Prostate gland (tissue), 2 donors: ENCODE measurements at regions of chr13 and their contacts with region 1.

Region 1: DNA sequence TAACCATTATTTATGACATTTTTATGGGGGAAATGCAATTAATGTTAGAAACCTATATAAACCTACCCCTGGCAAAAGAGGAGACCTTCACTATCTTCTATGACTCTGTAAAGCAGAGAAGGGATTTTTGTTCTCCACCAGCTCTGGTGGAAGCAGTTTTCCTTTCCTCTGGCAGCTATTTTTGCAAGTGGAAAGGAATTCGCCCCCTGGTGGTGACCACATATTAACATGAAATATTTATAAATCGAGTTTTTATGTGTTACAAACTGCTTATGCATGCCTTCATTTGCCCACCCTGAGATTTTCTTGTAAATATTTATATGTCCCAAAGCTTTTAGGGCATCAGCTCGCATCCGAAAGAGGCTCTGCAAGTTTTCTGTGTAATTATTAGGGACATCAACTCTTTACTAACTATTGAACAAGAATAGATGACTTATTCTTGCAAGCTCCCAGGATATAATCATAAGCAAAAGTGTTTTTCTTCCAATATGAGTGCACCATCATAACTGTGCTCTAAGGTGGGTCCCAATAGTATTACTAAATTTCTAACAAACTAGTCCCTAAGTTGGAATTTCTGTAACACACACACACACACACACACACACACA is 62.4 kb downstream of the SERTM1 start:
- DNase-seq: peak; percentile 59
- H3K4me3 ChIP-seq: no peak overlapping the region
- H3K27ac ChIP-seq: no peak overlapping the region
- H3K4me1 ChIP-seq: no peaks in the 10 kb centered on the region
- H3K27me3 ChIP-seq: no peaks in the 10 kb centered on the region
- CTCF ChIP-seq: peak; percentile 54 to 80 (median 69)
- POLR2A ChIP-seq: no peak

Region 2: GRCh38 chr13:35984776-35985453 is 751.3 kb before region 1 on chr13:
- intact Hi-C with region 1: loop called (anchors 10 kb)
- DNase-seq: no peak
- H3K4me3 ChIP-seq: no peak overlapping the region
- H3K27ac ChIP-seq: no peak overlapping the region
- H3K4me1 ChIP-seq: no peaks in the 10 kb centered on the region
- H3K27me3 ChIP-seq: no peaks in the 10 kb centered on the region
- CTCF ChIP-seq: no peak
- POLR2A ChIP-seq: no peak

Region 3: DNA sequence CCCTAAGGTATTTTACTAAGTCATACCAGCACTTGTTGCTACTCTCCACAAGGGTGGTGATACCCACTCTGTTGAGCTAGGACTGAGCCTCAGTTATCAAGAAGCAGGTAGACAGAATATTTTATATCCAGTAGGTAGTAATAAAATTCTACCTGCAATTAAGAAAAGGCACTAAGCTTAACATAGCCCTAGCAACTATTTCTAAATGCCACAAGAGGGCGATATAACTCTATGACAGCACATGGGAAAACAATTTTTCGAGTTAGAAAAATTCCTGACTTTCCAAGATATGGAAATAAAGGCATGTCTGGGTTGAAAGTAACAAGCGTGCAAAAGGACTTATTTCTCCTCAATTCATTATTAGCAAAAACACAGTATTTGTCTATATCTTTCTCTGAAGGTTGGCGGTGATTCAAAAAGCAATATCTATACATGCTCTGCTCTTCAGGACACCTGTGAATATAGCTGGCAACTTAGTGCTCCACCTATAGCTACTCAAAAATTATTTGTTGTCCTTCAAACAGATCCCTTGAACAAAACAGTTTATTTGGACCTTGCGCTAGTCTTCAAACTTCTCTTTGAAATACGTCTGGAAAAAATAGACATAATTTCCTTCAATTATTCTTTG is 453.3 kb before region 1 on chr13:
- intact Hi-C with region 1: loop called (anchors 5 kb)
- DNase-seq: no peak
- H3K4me3 ChIP-seq: no peak overlapping the region
- H3K27ac ChIP-seq: no peak overlapping the region
- H3K4me1 ChIP-seq: no peaks in the 10 kb centered on the region
- H3K27me3 ChIP-seq: no peaks in the 10 kb centered on the region
- CTCF ChIP-seq: peak; percentile 47 to 80 (median 78)
- POLR2A ChIP-seq: no peak

Region 4: DNA sequence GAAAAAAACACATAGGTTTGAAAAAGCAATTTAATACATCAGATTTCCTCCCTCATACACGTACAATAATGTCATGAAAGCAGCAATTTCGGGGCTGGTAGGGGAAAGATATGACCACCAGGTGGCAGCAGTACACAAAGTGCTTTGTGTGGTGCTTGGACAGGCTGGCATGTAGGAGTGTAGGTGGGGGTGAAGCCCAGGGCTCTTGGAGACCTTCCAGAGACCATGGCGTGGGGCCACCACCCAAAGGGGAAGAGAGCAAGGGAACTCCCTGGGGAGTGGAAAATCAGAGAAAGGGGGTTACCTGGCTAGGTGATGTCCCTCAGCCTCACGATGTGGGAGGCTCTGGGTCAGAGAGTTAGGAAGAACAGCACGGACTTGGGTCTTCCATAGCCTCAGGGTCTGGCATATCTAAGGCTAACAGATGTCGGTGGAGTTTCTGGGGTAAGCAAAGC is 315.8 kb before region 1 on chr13:
- intact Hi-C with region 1: loop called (anchors 10 kb)
- DNase-seq: peak; percentile 56
- H3K4me3 ChIP-seq: no peak overlapping the region
- H3K27ac ChIP-seq: no peak overlapping the region
- H3K4me1 ChIP-seq: no peaks in the 10 kb centered on the region
- H3K27me3 ChIP-seq: no peaks in the 10 kb centered on the region
- CTCF ChIP-seq: peak; percentile 72 to 82 (median 74)
- POLR2A ChIP-seq: no peak

Region 5: GRCh38 chr13:36650035-36650434 is 86.2 kb before region 1 on chr13:
- intact Hi-C with region 1: no loop called
- DNase-seq: no peak
- H3K4me3 ChIP-seq: no peak overlapping the region
- H3K27ac ChIP-seq: no peak overlapping the region
- H3K4me1 ChIP-seq: no peaks in the 10 kb centered on the region
- H3K27me3 ChIP-seq: no peaks in the 10 kb centered on the region
- CTCF ChIP-seq: no peak
- POLR2A ChIP-seq: no peak

Region 6: DNA sequence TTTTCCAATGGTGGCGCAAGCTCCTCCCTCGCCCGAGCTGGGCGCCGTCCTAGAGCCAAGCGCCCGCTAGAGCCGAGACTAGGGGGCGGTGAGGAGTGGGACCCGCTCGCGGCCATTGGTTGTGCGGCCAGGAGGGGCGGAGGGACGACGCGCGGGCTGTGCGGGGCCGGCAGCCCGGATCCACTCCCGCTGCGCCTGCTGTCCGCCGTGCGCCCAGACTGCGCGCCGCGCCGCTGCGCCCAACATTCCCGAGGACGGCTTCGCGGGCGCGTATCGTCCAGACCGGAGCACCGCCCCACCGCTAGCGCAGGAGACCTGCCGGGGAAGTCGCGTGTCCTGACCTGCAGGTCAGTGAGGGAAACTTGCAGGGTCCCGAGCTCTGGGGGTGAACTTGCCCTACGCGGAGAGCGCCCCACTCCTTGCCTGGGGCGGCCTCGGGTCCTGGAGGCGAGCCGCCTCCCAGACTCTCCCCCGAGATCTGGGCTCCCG is 62.3 kb before region 1 on chr13 and contains the start of gene SERTM1:
- intact Hi-C with region 1: no loop called
- DNase-seq: no peak
- H3K4me3 ChIP-seq: peak within 1 kb of the TSS; percentile 11
- H3K27ac ChIP-seq: no peak within 1 kb of the TSS
- H3K4me1 ChIP-seq: no peaks in the 10 kb centered on the region
- H3K27me3 ChIP-seq: peaks cover 18% of the 10 kb centered on the region
- CTCF ChIP-seq: no peak
- POLR2A ChIP-seq: no peak
- total RNA-seq, gene SERTM1: 0.36 TPM in 1 of 2 donors, not detected in the other